ENCODE measurements at regions of chr5 and their contacts with region 1.

Region 1: DNA sequence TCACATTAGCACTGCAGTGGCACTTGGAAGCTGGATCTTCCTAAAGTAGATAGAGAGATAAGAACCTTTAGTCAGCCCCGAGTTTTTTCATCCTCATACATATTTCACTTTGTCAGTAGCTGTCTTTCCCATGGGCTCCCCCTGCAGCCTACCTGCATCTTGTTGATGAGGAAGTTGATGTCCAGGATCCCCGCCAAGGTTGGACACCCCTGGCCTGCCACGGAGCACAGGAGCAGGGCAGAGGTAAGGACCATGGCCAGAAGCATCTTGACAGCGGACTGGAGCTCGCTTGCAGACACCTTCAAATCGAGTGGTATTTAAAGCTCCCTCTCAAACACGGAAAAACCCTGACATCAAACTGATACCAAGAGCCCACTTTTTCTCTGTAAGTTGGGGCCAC is at the start of gene IL9:
- DNase-seq: peak in 1 of 2 experiments; percentile 41
- H3K4me3 ChIP-seq: no peak within 1 kb of the TSS
- H3K4me3 Mint-ChIP-seq: no peak within 1 kb of the TSS
- H3K27ac Mint-ChIP-seq: no peak within 1 kb of the TSS
- H3K4me1 ChIP-seq: peaks cover 23% of the 10 kb centered on the region
- H3K4me1 Mint-ChIP-seq: peaks cover 32% of the 10 kb centered on the region
- H3K27me3 ChIP-seq: no peaks in the 10 kb centered on the region
- H3K27me3 Mint-ChIP-seq: peaks cover 4% of the 10 kb centered on the region
- CTCF ChIP-seq: no peak
- total RNA-seq, gene IL9: 0.79 TPM in 1 of 2 replicates, not detected in the other

Region 2: DNA sequence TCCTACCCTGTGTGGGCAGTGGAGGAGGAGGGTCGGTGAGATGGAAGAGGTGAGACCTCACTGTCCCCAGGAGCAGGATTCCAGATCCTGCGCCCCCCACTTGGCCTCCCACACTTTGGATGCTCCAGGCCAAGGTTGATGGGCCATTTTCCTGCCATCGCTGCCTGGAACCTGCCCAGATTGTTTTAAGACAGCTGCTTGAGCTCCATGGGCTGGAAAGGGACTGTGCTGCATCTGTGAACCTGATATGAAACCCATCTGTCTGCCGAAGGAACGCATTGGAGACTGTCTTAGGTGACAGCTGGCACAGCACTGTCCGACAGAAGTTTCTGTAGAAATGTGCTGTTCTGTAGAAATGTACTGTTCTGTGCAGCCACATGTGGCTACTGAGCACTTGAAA is 133.8 kb before region 1 on chr5:
- CTCF ChIA-PET with region 1: no interaction called
- POLR2A ChIA-PET with region 1: no interaction called
- intact Hi-C with region 1: no loop called
- DNase-seq: no peak
- H3K4me3 ChIP-seq: no peak overlapping the region
- H3K4me3 Mint-ChIP-seq: no peak overlapping the region
- H3K27ac Mint-ChIP-seq: no peak overlapping the region
- H3K4me1 ChIP-seq: no peaks in the 10 kb centered on the region
- H3K4me1 Mint-ChIP-seq: no peaks in the 10 kb centered on the region
- H3K27me3 ChIP-seq: no peaks in the 10 kb centered on the region; the same call in 1 of the 2 replicates
- H3K27me3 Mint-ChIP-seq: peaks cover 3% of the 10 kb centered on the region
- CTCF ChIP-seq: no peak

Region 3: GRCh38 chr5:135909639-135910038 is 14.1 kb after region 1 on chr5:
- CTCF ChIA-PET with region 1: no interaction called
- POLR2A ChIA-PET with region 1: no interaction called
- intact Hi-C with region 1: no loop called
- DNase-seq: peak in 1 of 2 experiments; percentile 29
- H3K4me3 ChIP-seq: no peak overlapping the region
- H3K4me3 Mint-ChIP-seq: no peak overlapping the region
- H3K27ac Mint-ChIP-seq: no peak overlapping the region
- H3K4me1 ChIP-seq: peaks cover 12% of the 10 kb centered on the region
- H3K4me1 Mint-ChIP-seq: peaks cover 16% of the 10 kb centered on the region
- H3K27me3 ChIP-seq: no peaks in the 10 kb centered on the region; the same call in 1 of the 2 replicates
- H3K27me3 Mint-ChIP-seq: peaks cover 12% of the 10 kb centered on the region
- CTCF ChIP-seq: no peak

Region 4: GRCh38 chr5:135930029-135930948 is 34.7 kb after region 1 on chr5:
- CTCF ChIA-PET with region 1: interaction called, 3 read pairs
- POLR2A ChIA-PET with region 1: no interaction called
- intact Hi-C with region 1: loop called (anchors 2 kb)
- DNase-seq: no peak
- H3K4me3 ChIP-seq: no peak overlapping the region
- H3K4me3 Mint-ChIP-seq: no peak overlapping the region
- H3K27ac Mint-ChIP-seq: no peak overlapping the region
- H3K4me1 ChIP-seq: peaks cover 14% of the 10 kb centered on the region
- H3K4me1 Mint-ChIP-seq: peaks cover 14% of the 10 kb centered on the region
- H3K27me3 ChIP-seq: no peaks in the 10 kb centered on the region
- H3K27me3 Mint-ChIP-seq: no peaks in the 10 kb centered on the region
- CTCF ChIP-seq: no peak

Measured in Caco-2 (cell line).